Cardiac septum (tissue), 1 donor: ENCODE measurements at regions of chr12 and their contacts with region 1.

Region 1: DNA sequence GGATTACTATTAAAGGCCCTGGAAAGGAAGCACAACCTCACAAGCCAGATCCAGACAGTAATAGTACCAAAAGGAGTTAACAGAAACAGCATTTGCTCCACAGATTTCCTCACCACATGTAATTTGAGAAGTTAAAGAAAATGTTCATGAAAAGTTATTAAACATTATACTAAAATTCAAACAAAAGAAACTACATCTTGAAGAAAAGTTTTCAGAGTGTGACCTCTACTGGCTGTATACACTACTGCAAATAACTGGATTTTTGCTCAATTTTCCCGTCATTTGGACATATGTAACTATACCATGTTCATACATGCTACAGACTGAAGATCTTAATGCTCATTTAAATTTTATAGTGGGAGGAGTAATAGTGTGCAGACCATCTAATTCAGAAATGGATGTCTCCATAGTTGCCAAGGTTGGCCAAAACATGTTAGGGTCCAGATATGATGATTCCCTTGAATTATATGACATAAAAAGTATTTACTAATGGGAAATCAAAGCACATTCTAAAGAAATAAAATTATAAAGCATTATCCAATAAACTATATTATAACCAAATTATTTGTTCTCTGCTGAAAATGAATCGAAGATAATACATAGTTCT is 5.6 kb downstream of the KRR1 start:
- DNase-seq: no peak

Region 2: DNA sequence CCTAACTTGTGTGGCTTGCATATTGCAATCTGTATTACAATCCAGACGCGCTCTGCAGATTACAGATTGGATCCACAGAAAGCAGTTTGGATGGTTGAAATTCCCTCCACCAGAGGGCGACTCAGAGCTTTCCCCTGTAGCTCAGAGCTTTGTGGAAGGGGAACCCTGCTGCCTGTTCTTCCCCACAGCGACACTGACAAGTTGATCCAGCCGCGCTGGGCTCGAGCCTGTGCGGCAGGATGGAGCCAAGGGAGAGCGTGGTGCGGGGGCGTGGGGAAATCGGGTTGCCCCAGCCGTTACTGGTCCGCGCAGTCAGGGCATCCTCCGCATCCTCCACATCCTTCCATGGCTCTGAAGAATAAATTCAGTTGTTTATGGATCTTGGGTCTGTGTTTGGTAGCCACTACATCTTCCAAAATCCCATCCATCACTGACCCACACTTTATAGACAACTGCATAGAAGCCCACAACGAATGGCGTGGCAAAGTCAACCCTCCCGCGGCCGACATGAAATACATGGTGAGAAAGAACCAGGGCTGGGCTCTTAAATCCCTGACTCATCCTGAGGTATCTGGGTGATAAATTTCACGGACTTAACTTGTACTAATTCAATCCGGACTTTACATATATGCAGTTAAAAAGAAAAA is 171.3 kb before region 1 on chr12 and contains the start of gene GLIPR1L1:
- intact Hi-C with region 1: loop called (anchors 10 kb)
- DNase-seq: peak; percentile 89
- total RNA-seq, gene GLIPR1L1: not detected

Region 3: GRCh38 chr12:75457191-75457590 is 48.6 kb before region 1 on chr12:
- intact Hi-C with region 1: no loop called
- DNase-seq: no peak